HepG2 (cell line): ENCODE measurements at regions of chr20 and their contacts with region 1.

Region 1: GRCh38 chr20:63980806-63981728 is at the start of gene PRPF6:
- DNase-seq: peak; percentile 97
- ATAC-seq: peak; percentile 73
- H3K4me3 ChIP-seq: peak within 1 kb of the TSS; percentile 95 to 99 (median 97)
- H3K27ac ChIP-seq: peak within 1 kb of the TSS; percentile 81
- H3K4me1 ChIP-seq: peaks cover 42% of the 10 kb centered on the region
- H3K27me3 ChIP-seq: no peaks in the 10 kb centered on the region; a peak in 1 of 5 replicates
- CTCF ChIP-seq: peak; percentile 100
- EP300 ChIP-seq: peak in 1 of 2 experiments; percentile 40; a peak in 1 of 4 replicates
- POLR2A ChIP-seq: peak in 1 of 2 experiments; percentile 95; a peak in 2 of 4 replicates
- RAD21 ChIP-seq: peak; percentile 94
- total RNA-seq, gene PRPF6: 101 and 127 TPM in 2 replicates

Region 2: DNA sequence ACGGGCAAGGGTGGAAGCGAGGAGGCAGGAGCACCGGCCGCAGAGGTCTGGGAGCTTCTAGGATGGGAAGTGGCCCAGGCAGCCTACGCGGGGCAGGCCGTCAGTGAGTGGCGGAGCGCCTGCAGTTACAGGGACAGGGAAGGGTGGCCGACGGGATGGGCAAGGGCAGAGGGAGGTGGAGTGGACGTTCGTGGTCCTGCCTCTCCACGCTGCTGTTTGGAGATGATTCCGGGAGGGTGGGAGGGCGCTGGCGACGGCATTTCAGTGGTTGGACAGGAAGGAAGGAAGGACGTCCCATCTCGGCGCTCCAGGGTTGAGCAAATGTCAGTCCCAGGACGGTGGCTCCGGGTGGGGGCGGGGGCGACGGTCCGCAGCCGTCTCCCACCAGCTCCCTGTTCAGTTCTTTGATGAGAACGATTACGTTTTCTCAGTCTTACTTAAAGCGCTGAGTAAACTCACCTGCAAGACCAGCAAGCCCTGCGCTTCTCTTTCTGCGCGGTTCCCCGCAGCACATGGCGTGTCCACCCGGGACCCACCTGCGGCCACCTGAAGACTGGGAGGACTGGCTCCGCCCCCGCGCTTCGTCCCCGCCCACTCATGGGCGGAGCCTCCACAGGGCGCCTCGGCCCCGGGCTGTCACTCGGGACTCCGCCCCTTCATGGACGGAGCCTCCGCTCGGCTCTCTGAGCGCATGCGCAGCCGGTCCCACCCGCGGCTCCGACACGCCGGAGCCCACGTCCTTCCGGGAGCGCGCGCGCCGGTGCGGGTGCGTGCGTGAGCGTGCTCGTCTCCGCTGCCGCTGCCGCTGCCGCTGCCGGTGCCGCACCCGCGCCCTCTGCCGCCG is 86.5 kb before region 1 on chr20 and contains the start of gene DNAJC5:
- CTCF ChIA-PET with region 1: no interaction called
- POLR2A ChIA-PET with region 1: interaction called, 26 read pairs
- in situ Hi-C with region 1: no loop called
- intact Hi-C with region 1: no loop called
- DNase-seq: peak; percentile 95
- ATAC-seq: peak; percentile 82
- H3K4me3 ChIP-seq: peak within 1 kb of the TSS; percentile 73 to 82 (median 77)
- H3K27ac ChIP-seq: peak within 1 kb of the TSS; percentile 60
- H3K4me1 ChIP-seq: peaks cover 39% of the 10 kb centered on the region
- H3K27me3 ChIP-seq: no peaks in the 10 kb centered on the region; a peak in 1 of 5 replicates
- CTCF ChIP-seq: no peak
- EP300 ChIP-seq: peak in 1 of 2 experiments; percentile 49; a peak in 1 of 4 replicates
- POLR2A ChIP-seq: peak; percentile 76 to 87
- RAD21 ChIP-seq: 0 out of 2 replicates have a peak, but pooled peaks have one; percentile 56
- total RNA-seq, gene DNAJC5: 54.3 and 64.5 TPM in 2 replicates

Region 3: DNA sequence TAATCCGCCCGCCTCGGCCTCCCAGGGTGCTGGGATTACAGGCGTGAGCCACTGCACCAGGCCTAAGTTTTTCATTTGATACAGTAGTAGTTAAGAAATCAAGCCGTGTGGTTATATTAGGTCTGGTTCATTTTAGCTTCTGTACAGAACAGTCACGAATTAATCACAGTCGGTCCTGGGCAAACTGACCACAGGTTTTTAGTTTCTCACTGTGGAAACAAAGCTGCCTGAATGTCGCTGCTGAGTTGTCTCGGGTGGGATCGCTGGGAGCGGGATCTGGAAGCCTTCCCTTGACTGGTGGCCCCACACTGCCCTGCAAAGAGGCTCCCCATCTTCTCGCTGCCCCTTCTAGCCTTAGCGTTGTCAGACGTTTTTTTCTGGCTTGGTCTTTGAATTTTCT is 43.5 kb before region 1 on chr20:
- CTCF ChIA-PET with region 1: no interaction called
- POLR2A ChIA-PET with region 1: no interaction called
- in situ Hi-C with region 1: no loop called
- intact Hi-C with region 1: no loop called
- DNase-seq: no peak
- ATAC-seq: no peak
- H3K4me3 ChIP-seq: no peak overlapping the region
- H3K27ac ChIP-seq: no peak overlapping the region
- H3K4me1 ChIP-seq: no peaks in the 10 kb centered on the region
- H3K27me3 ChIP-seq: no peaks in the 10 kb centered on the region
- CTCF ChIP-seq: no peak
- EP300 ChIP-seq: no peak
- POLR2A ChIP-seq: no peak; a peak in 1 of 4 replicates
- RAD21 ChIP-seq: no peak

Region 4: GRCh38 chr20:63947638-63948456 is 33.2 kb before region 1 on chr20:
- CTCF ChIA-PET with region 1: no interaction called
- POLR2A ChIA-PET with region 1: no interaction called
- in situ Hi-C with region 1: no loop called
- intact Hi-C with region 1: no loop called
- DNase-seq: no peak
- ATAC-seq: no peak
- H3K4me3 ChIP-seq: no peak overlapping the region
- H3K27ac ChIP-seq: peak overlapping the region; percentile 82
- H3K4me1 ChIP-seq: peaks cover 45% of the 10 kb centered on the region
- H3K27me3 ChIP-seq: no peaks in the 10 kb centered on the region
- CTCF ChIP-seq: no peak
- EP300 ChIP-seq: no peak
- POLR2A ChIP-seq: no peak
- RAD21 ChIP-seq: no peak

Region 5: GRCh38 chr20:64024141-64024990 is 43.3 kb after region 1 on chr20:
- CTCF ChIA-PET with region 1: no interaction called
- POLR2A ChIA-PET with region 1: interaction called, 37 read pairs
- in situ Hi-C with region 1: loop called (anchors 5 kb)
- intact Hi-C with region 1: loop called (anchors 1 kb)
- DNase-seq: peak; percentile 100
- ATAC-seq: peak; percentile 90
- H3K4me3 ChIP-seq: peak overlapping the region in 2 of 3 experiments; percentile 18 to 63; a peak in 4 of 6 replicates
- H3K27ac ChIP-seq: peak overlapping the region; percentile 92
- H3K4me1 ChIP-seq: peaks cover 42% of the 10 kb centered on the region
- H3K27me3 ChIP-seq: no peaks in the 10 kb centered on the region
- CTCF ChIP-seq: peak; percentile 53
- EP300 ChIP-seq: peak; percentile 5 to 92; a peak in 3 of 4 replicates
- POLR2A ChIP-seq: peak; percentile 73 to 93
- RAD21 ChIP-seq: peak; percentile 72

Region 6: GRCh38 chr20:64053841-64054661 is 73.0 kb after region 1 on chr20:
- CTCF ChIA-PET with region 1: interaction called, 33 read pairs
- POLR2A ChIA-PET with region 1: interaction called, 41 read pairs
- in situ Hi-C with region 1: loop called (anchors 5 kb)
- intact Hi-C with region 1: loop called (anchors 1 kb)
- DNase-seq: peak; percentile 94
- ATAC-seq: peak; percentile 41
- H3K4me3 ChIP-seq: peak overlapping the region; percentile 45 to 69 (median 46)
- H3K27ac ChIP-seq: peak overlapping the region; percentile 77
- H3K4me1 ChIP-seq: peaks cover 87% of the 10 kb centered on the region
- H3K27me3 ChIP-seq: no peaks in the 10 kb centered on the region; a peak in 1 of 5 replicates
- CTCF ChIP-seq: peak; percentile 91
- EP300 ChIP-seq: peak; percentile 49 to 61; a peak in 3 of 4 replicates
- POLR2A ChIP-seq: peak in 1 of 2 experiments; percentile 65; a peak in 2 of 4 replicates
- RAD21 ChIP-seq: peak; percentile 87

Region 7: GRCh38 chr20:64091770-64092169 is 110.7 kb after region 1 on chr20:
- CTCF ChIA-PET with region 1: no interaction called
- POLR2A ChIA-PET with region 1: no interaction called
- in situ Hi-C with region 1: no loop called
- intact Hi-C with region 1: no loop called
- DNase-seq: no peak
- ATAC-seq: peak; percentile 10
- H3K4me3 ChIP-seq: no peak overlapping the region
- H3K27ac ChIP-seq: no peak overlapping the region
- H3K4me1 ChIP-seq: peaks cover 11% of the 10 kb centered on the region
- H3K27me3 ChIP-seq: peaks cover 22 to 43% of the 10 kb centered on the region in 2 experiments; a peak in 4 of 5 replicates
- CTCF ChIP-seq: no peak
- EP300 ChIP-seq: no peak
- POLR2A ChIP-seq: no peak
- RAD21 ChIP-seq: no peak

Region 8: GRCh38 chr20:64119681-64120341 is 138.7 kb after region 1 on chr20:
- CTCF ChIA-PET with region 1: interaction called, 11 read pairs
- POLR2A ChIA-PET with region 1: interaction called, 5 read pairs
- in situ Hi-C with region 1: no loop called
- intact Hi-C with region 1: loop called (anchors 2 kb)
- DNase-seq: no peak
- ATAC-seq: peak; percentile 37
- H3K4me3 ChIP-seq: 0 out of 6 replicates have a peak overlapping the region, but pooled peaks of 1 of the 3 experiments have one; percentile 8
- H3K27ac ChIP-seq: no peak overlapping the region
- H3K4me1 ChIP-seq: peaks cover 11% of the 10 kb centered on the region
- H3K27me3 ChIP-seq: peaks cover 7 to 34% of the 10 kb centered on the region in 2 experiments
- CTCF ChIP-seq: no peak
- EP300 ChIP-seq: no peak
- POLR2A ChIP-seq: no peak
- RAD21 ChIP-seq: no peak